Activated CD8-positive, alpha-beta T cell treated with anti-CD3 and anti-CD28 coated beads for 36 hours (primary cell): ENCODE measurements at regions of chr19 and their contacts with region 1.

Region 1: GRCh38 chr19:43519436-43520088 is 7.4 kb downstream of the ETHE1 start:
- DNase-seq: peak; percentile 85
- ATAC-seq: peak; percentile 91
- H3K4me3 Mint-ChIP-seq: no peak overlapping the region
- H3K27ac Mint-ChIP-seq: no peak overlapping the region
- H3K4me1 Mint-ChIP-seq: peaks cover 17% of the 10 kb centered on the region
- H3K27me3 Mint-ChIP-seq: no peaks in the 10 kb centered on the region
- CTCF ChIP-seq: peak; percentile 95

Region 2: DNA sequence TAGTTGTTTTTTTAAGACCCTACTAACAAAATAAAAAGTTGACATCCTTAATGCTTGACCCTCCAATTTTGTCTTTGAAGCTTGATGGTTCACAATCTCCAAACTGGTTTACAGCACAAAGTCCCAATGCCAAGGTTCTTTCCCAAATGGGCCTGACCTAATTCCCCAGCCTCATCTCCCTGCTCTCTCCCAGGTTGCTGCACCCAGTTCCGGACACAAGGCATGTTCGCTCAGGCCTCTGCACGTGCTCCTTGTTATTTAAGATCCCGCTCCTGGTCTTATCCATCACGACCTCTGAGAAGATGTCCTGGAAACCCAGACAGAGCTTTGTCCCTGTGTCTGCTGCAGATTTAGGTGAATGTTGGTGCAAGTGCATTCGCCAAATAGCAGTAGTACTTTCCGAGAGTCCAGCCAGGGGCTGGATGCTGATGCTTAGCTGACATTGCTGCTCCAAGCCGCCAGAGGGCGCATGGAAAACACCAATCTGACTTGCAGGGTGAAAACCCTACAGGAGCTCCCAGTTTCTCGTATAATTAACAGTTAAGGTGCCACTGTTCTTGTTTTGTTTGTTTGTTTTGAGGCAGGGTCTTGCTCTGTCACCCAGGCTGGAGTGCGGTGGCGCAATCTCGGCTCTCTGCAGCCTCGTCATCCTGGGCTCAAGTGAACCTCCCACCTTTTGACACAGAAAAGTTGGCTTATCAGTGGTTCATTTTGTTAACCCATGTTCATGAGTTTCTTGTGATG is 72.6 kb before region 1 on chr19:
- CTCF ChIA-PET with region 1: interaction called, 328 read pairs
- POLR2A ChIA-PET with region 1: interaction called, 17 read pairs
- intact Hi-C with region 1: loop called (anchors 1 kb)
- DNase-seq: peak; percentile 84
- ATAC-seq: peak; percentile 91
- H3K4me3 Mint-ChIP-seq: no peak overlapping the region
- H3K27ac Mint-ChIP-seq: no peak overlapping the region
- H3K4me1 Mint-ChIP-seq: peaks cover 18% of the 10 kb centered on the region
- H3K27me3 Mint-ChIP-seq: no peaks in the 10 kb centered on the region
- CTCF ChIP-seq: peak; percentile 94

Region 3: GRCh38 chr19:43463381-43464136 is 56.0 kb before region 1 on chr19:
- CTCF ChIA-PET with region 1: interaction called, 14 read pairs
- POLR2A ChIA-PET with region 1: no interaction called
- intact Hi-C with region 1: no loop called
- DNase-seq: peak; percentile 100
- ATAC-seq: peak; percentile 87
- H3K4me3 Mint-ChIP-seq: peak overlapping the region; percentile 84
- H3K27ac Mint-ChIP-seq: peak overlapping the region; percentile 94
- H3K4me1 Mint-ChIP-seq: peaks cover 41% of the 10 kb centered on the region
- H3K27me3 Mint-ChIP-seq: no peaks in the 10 kb centered on the region
- CTCF ChIP-seq: no peak

Region 4: DNA sequence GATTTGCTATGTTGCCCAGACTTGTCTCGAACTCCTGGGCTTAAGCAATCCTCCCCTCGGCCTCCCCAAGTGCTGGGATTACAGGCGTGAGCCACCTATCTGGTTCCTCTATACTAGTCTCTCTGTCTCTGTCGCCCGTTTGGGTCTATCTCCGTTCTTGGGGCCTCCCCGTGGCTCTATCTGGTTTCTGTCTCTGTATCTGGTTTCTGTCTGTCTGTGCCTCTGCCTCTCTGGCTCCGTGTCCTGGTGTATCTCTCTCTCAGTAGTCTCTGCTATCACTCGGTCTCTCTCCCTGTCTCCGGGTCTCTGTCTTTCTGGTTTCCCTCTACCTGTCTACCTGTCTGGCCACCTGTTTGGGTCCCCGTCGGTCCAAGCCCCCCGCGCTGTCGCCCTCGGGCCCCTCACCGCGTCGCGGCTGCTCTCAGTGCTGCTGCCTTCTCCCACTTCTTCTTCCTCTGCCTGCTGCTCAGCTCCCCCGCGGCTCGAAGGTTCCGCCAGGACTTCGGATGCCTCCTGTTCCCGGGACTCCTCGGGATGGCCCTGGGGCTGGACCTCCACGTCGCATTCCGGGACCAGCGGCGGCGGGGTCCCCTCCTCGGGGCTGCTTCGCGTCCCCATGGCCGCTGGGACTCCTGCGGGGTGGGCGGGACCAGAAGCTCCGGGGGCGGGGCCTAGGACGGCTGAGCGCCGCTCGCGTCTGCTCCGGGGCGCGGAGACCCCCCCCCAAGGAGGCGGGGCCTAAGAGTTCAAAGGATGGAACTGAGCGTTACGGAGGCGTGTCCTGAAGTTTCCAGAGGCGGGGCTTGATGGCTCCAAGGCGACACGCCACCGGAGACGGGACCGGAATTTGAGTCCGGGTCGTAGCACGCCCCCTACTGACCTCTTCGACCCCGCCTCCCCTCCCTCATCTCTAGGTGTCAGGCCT is 15.8 kb before region 1 on chr19:
- CTCF ChIA-PET with region 1: interaction called, 31 read pairs
- POLR2A ChIA-PET with region 1: interaction called, 4 read pairs
- intact Hi-C with region 1: no loop called
- DNase-seq: peak; percentile 100
- ATAC-seq: peak; percentile 97
- H3K4me3 Mint-ChIP-seq: peak overlapping the region; percentile 96
- H3K27ac Mint-ChIP-seq: peak overlapping the region; percentile 97
- H3K4me1 Mint-ChIP-seq: peaks cover 18% of the 10 kb centered on the region
- H3K27me3 Mint-ChIP-seq: no peaks in the 10 kb centered on the region
- CTCF ChIP-seq: no peak

Region 5: GRCh38 chr19:43555185-43555770 is 35.7 kb after region 1 on chr19:
- CTCF ChIA-PET with region 1: interaction called, 11 read pairs
- POLR2A ChIA-PET with region 1: no interaction called
- intact Hi-C with region 1: no loop called
- DNase-seq: peak; percentile 91
- ATAC-seq: peak; percentile 99
- H3K4me3 Mint-ChIP-seq: no peak overlapping the region
- H3K27ac Mint-ChIP-seq: no peak overlapping the region
- H3K4me1 Mint-ChIP-seq: peaks cover 6% of the 10 kb centered on the region
- H3K27me3 Mint-ChIP-seq: no peaks in the 10 kb centered on the region
- CTCF ChIP-seq: peak; percentile 68

Region 6: DNA sequence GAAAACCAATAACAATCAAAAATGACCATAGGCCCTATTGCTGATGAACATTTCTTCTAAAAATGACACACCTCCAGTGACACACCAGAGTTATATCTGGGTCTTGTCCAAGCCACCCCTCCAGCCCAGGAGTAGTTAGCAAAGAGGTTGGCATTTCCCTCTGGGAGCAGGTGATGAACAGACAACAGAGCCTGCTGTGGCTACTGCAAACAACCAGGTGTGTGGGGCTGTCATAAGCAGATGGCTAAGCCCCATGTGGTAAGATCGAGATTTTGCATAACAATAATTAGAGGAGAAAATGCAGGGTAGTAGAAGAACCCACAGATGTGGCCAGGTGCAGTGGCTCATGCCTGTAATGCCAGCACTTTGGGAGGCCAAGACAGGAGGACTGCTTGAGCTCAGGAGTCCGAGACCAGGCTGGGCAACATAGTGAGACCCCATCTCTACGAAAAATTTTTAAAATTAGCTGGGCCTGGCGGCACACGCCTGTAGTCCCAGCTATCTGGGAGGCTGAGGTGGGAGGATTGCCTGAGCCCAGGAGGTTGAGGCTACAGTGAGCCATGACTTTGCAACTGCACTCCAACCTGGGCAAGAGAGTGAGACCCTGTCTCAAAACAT is 50.7 kb after region 1 on chr19:
- CTCF ChIA-PET with region 1: no interaction called
- POLR2A ChIA-PET with region 1: no interaction called
- intact Hi-C with region 1: no loop called
- DNase-seq: no peak
- ATAC-seq: no peak
- H3K4me3 Mint-ChIP-seq: no peak overlapping the region
- H3K27ac Mint-ChIP-seq: peak overlapping the region; percentile 4
- H3K4me1 Mint-ChIP-seq: peaks cover 26% of the 10 kb centered on the region
- H3K27me3 Mint-ChIP-seq: no peaks in the 10 kb centered on the region
- CTCF ChIP-seq: no peak